ENCODE measurements at regions of chr15 and their contacts with region 1.

Region 1: DNA sequence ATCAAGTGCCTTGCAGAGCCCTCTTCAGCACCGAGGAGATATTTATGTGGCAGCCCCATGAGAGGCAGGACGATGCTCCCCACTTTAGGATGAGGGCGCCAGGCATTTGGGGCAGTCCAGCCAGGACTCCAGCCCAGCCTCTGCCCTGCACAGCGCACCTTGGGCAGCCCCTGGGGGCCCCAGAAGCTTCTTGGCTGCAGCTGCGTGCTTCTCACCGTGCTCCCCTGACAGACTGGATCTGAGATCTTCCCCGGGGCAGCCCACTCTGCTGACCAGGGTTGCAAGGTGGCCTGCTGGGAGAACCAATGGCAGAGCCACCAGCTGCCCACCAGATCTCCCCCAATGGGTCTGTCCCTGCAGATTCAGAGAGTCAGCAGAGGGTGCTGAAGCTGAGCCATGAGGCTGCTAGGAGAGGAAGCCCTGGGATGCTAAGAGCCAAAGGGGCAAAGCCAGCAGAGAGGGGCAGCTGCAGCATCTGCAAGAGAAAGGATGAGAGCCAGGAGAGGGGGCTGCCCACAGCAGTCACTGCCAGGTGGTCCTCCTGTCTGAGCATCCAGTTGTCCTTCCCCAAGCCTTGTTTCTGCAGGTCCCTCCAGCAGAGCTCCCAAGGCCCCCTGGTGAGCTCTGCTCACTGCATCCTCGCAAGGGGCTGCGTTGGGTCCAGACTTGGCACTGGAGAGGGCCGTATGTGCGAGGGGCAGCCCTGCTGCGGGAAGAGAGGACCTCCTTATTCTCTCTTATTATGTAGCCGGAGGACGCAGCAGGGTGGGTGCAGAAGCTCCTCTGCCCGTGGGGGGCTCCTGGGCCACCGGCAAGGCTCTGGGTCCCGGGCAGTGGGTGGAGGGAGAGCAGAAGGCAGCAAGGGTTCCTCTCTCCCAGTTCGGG is 14.7 kb upstream of the KLF13 start:
- DNase-seq: no peak
- ATAC-seq: no peak
- H3K4me3 ChIP-seq: no peak overlapping the region
- H3K27ac ChIP-seq: no peak overlapping the region
- H3K4me1 ChIP-seq: no peaks in the 10 kb centered on the region
- H3K27me3 ChIP-seq: no peaks in the 10 kb centered on the region
- CTCF ChIP-seq: no peak
- POLR2A ChIP-seq: no peak

Region 2: DNA sequence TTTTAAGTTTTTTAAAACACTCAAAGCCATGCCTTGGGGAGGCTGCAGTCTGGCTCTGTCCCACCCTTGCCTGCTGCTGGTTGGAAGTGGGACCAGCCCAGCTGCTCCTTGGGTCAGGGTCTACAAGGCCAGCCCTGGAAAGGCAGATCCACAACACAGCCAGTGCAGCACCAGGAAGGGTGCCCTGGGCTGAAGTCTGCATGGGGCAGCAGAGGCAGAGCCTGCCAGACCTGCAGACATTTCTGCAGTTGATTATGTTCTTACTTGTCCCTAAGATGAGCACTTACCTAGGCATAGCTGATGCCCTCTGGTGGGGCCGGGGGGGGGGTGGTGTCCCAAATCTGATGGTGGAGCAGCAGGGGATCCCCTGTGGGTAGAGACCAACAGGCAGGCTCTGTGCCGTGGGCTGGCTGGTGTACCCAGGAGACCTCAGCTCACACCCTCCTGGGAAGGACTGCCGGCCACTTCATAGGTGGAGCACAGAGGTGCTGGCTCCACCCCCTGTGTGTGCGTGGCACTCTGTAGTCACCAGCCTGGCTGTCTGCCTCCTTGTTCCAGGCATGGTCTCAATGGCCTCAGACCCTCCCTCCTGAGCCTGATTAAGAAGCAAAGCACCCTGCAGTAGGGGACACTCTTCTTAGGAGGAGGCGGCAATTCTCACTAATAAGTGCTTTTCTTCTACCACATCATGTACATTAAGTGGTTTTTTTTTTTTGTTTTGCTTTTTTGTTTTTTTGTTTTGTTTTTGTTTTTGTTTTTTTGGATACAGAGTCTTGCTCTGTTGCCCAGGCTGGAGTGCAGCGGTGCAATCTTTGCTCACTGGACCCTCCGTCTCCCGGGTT is 82.8 kb before region 1 on chr15:
- intact Hi-C with region 1: loop called (anchors 10 kb)
- DNase-seq: peak; percentile 44 to 67 (median 56)
- ATAC-seq: peak; percentile 86
- H3K4me3 ChIP-seq: no peak overlapping the region
- H3K27ac ChIP-seq: no peak overlapping the region
- H3K4me1 ChIP-seq: peaks cover 4% of the 10 kb centered on the region
- H3K27me3 ChIP-seq: no peaks in the 10 kb centered on the region
- CTCF ChIP-seq: no peak
- POLR2A ChIP-seq: peak; percentile 9 to 47 (median 40)

Region 3: GRCh38 chr15:31458591-31459399 is 146.8 kb after region 1 on chr15:
- intact Hi-C with region 1: no loop called
- DNase-seq: no peak
- ATAC-seq: no peak
- H3K4me3 ChIP-seq: no peak overlapping the region
- H3K27ac ChIP-seq: no peak overlapping the region
- H3K4me1 ChIP-seq: no peaks in the 10 kb centered on the region
- H3K27me3 ChIP-seq: no peaks in the 10 kb centered on the region
- CTCF ChIP-seq: no peak
- POLR2A ChIP-seq: no peak

Measured in body of pancreas (tissue), 4 donors.